ENCODE measurements at regions of chr2 and their contacts with region 1.

Region 1: DNA sequence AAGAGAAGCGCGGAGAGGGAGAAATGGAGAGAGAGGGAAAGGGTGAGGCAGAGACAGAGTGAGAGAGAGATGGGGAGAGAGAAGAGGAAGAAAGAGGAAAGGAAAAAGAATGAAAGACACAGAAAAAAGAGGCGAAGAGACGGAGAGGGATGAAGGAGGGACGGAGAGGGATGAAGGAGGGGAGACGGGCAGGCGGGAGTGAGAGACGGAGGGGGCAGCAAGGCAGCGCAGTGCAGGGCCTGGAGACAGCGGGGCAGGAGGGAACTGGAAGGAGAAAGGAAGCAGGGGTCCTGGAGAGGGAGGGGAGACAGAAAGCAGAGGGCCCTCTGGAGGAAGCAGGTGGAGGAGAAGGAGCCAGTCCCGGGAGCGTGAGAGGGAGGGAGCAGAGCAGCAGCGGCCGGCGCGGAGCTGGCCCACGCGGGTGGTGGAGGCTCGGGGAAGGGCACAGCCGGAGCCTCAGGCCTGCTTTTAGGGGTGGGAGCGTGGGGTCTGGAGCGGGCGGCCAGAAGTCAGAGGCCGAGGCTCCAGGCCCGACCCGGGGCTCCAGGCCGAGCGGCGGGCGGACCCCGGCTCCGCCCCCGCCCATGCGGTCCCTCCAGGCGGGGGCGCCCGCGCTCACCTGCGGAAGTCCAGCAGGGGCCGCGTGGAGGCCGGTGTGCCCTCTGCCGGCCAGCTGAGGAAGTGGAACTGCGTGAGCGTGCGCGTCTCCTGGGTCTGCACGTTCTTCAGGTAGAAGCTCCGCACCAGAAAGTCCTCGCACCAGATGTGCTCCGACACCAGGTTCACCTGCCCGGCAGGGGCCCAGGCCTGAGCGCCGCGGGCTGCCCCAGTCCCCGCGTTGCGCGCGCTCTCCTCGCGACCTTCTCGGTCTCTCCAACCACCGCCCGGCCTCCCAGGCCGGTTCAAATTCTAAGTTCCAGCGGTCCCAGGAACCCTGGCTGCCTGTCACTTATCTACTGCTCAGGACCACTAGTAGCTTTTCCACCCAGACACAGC is 14.5 kb downstream of the PTPRN start:
- DNase-seq: peak; percentile 92
- H3K4me3 Mint-ChIP-seq: peak overlapping the region; percentile 55
- H3K27ac Mint-ChIP-seq: peak overlapping the region; percentile 21
- H3K4me1 Mint-ChIP-seq: peaks cover 11% of the 10 kb centered on the region
- H3K27me3 Mint-ChIP-seq: peaks cover 7% of the 10 kb centered on the region

Region 2: DNA sequence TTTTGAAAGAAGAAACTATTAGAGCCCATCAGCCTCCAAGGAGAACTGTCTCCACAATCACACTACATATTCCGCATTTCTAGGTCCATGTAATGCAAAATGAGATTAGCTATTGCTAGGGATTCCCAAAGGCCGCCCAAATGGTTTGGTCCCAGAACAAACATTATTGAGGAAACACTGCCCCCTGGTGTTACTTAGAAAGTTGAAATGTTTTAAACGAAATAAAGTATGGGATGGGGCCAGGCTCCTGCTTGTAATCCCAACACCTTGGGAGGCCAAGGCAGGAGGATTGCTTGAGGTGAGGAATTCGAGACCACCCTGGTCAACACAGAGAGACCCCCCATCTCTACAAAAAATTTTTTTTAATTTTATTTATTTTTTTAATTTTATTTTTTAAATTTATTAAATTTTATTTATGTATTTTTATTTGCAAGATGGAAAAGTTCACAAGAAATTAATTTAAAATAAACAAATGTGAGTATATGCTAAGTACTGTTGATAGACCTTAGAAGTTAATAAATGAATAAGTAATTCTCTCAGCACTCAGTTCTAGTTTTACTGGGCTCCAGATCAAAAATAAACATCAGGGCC is 139.5 kb before region 1 on chr2:
- CTCF ChIA-PET with region 1: interaction called, 136 read pairs
- POLR2A ChIA-PET with region 1: interaction called, 5 read pairs
- intact Hi-C with region 1: loop called (anchors 1 kb)
- DNase-seq: peak; percentile 31
- H3K4me3 Mint-ChIP-seq: no peak overlapping the region
- H3K27ac Mint-ChIP-seq: no peak overlapping the region
- H3K4me1 Mint-ChIP-seq: peaks cover 8% of the 10 kb centered on the region
- H3K27me3 Mint-ChIP-seq: no peaks in the 10 kb centered on the region

Region 3: GRCh38 chr2:219177552-219178376 is 116.9 kb before region 1 on chr2 and contains the start of gene RETREG2:
- CTCF ChIA-PET with region 1: interaction called, 27 read pairs
- POLR2A ChIA-PET with region 1: interaction called, 6 read pairs
- intact Hi-C with region 1: loop called (anchors 2 kb)
- DNase-seq: peak; percentile 86
- H3K4me3 Mint-ChIP-seq: peak within 1 kb of the TSS; percentile 95
- H3K27ac Mint-ChIP-seq: peak within 1 kb of the TSS; percentile 99
- H3K4me1 Mint-ChIP-seq: peaks cover 52% of the 10 kb centered on the region
- H3K27me3 Mint-ChIP-seq: no peaks in the 10 kb centered on the region
- total RNA-seq, gene RETREG2: 60.3 to 67.9 TPM

Region 4: GRCh38 chr2:219229305-219230058 is 65.2 kb before region 1 on chr2 and contains the starts of genes ANKZF1 and ATG9A:
- CTCF ChIA-PET with region 1: interaction called, 38 read pairs
- POLR2A ChIA-PET with region 1: interaction called, 13 read pairs
- intact Hi-C with region 1: loop called (anchors 1 kb)
- DNase-seq: peak; percentile 99
- H3K4me3 Mint-ChIP-seq: peak within 1 kb of the TSS; percentile 95
- H3K27ac Mint-ChIP-seq: peak within 1 kb of the TSS; percentile 99
- H3K4me1 Mint-ChIP-seq: peaks cover 50% of the 10 kb centered on the region
- H3K27me3 Mint-ChIP-seq: no peaks in the 10 kb centered on the region
- total RNA-seq, gene ANKZF1: 97.0 to 97.5 TPM
- total RNA-seq, gene ATG9A: 34.7 to 39.5 TPM

Region 5: DNA sequence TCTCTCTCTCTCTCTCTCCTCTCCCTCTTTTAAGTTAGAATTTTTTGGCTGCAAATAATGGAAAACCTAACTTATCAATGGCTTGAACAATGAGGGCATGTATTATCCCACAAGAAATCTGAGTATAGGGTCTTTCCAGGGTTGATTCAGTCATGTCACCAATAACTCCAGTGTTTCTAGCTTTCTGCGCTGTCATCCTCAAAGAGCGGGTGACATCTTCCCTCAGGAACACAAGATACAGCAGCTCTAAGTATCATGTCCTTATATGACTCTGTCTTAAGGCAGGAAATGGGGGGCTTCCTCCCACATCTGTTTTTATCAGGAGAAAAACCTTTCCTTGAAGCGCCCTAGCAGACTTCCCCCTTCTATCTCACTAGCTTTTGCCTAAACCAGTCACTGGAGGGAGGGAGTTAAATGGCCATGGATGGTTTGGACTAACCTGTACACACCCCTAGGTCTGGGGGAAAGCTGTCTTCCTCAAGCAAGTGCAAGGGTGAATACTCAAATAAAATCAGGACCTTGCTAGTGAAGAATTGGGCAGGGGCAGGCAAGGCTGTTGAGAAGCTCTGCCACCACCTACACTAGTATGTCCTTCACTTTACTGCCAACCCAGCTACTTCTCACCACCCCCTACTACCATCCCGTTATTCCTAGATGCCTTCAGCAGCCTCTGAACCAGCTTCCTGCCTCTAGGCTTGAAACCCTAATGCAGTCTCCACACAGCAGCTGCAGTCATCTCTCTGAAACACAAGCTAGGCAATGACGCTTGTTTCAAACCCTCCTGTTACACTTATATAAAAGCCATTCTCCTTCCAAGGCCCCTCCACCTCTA is 33.4 kb before region 1 on chr2:
- CTCF ChIA-PET with region 1: interaction called, 87 read pairs
- POLR2A ChIA-PET with region 1: no interaction called
- intact Hi-C with region 1: no loop called
- DNase-seq: no peak
- H3K4me3 Mint-ChIP-seq: no peak overlapping the region
- H3K27ac Mint-ChIP-seq: no peak overlapping the region
- H3K4me1 Mint-ChIP-seq: no peaks in the 10 kb centered on the region
- H3K27me3 Mint-ChIP-seq: peaks cover 1% of the 10 kb centered on the region

Region 6: DNA sequence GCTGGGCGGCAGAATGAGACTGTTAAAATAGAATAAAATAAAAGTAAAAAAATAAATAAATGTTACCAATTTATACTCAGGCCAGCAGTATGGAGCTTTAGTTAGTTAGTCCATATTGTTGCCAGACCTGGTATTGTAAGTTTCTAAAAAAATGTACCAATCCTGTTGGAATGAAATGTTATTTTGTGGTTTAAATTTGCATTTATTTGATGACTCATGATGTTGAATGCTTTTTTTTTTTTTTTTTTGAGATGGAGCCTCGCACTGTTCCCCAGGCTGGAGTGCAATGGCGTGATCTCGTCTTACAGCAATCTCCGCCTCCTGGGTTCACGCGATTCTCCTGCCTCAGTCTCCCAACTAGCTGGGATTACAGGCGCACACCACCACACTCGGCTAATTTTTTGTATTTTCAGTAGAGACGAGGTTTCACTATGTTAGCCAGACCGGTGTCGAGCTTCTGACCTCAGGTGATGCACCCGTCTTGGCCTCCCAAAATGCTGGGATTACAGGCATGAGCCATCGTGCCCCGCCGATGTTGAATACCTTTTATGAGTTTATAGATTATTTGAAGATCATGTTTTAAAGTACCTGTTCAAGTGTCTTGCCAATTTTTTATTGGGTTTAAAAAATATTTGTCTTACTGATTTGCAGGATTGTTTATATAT is 20.3 kb after region 1 on chr2:
- CTCF ChIA-PET with region 1: interaction called, 14 read pairs
- POLR2A ChIA-PET with region 1: no interaction called
- intact Hi-C with region 1: no loop called
- DNase-seq: no peak
- H3K4me3 Mint-ChIP-seq: no peak overlapping the region
- H3K27ac Mint-ChIP-seq: no peak overlapping the region
- H3K4me1 Mint-ChIP-seq: no peaks in the 10 kb centered on the region
- H3K27me3 Mint-ChIP-seq: peaks cover 15% of the 10 kb centered on the region